Tibial artery (tissue), 4 donors: ENCODE measurements at regions of chr7 and their contacts with region 1.

Region 1: DNA sequence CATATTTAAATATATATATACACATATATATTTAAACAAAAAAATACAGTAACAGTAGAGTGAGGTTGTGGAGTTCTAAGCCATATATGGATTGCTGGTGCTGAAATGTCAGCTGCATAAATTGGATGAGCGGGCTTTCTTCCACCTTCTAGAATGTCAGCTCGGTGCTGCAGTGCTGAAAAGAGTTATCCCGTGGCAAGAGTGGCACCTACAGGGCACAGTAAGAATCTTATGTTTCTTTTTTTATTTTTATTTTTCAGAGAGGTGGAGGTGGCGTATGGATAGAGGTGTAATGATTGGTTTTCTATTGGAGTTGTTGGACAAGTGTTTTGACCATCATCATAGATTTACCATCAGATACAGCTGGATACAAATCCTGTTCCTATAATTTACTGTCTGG is 86.2 kb upstream of the DYNC1I1 start:
- DNase-seq: peak; percentile 40 to 68
- H3K4me3 ChIP-seq: no peak overlapping the region
- H3K27ac ChIP-seq: no peak overlapping the region
- H3K4me1 ChIP-seq: no peaks in the 10 kb centered on the region
- H3K27me3 ChIP-seq: no peaks in the 10 kb centered on the region
- CTCF ChIP-seq: peak; percentile 53 to 76

Region 2: DNA sequence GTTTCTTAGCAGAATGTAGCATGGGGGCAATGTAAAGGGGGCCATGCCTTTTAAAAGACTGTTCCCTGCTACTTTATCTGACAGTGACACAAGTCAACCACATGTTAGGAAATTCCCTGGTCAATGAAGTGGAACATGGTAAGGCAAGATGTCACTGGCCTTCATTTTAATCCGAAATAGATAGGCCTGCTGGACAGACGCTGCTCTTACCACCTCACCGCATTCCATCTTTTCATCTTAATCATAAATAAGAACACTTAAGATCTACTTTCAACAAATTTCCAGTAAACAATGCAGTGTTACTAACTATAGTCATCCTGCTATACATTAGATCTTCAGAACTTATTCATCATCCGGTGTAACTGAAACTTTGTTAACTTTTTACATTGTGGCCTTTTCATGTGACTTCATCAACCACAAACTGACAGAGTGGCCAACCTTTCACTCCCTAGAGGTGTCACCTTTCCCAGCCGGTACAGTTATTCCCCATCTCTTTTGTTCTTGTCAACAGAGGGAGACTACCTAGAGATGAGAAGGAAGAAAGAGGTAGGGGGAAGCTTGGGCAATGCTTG is 184.8 kb before region 1 on chr7:
- intact Hi-C with region 1: no loop called
- DNase-seq: no peak
- H3K4me3 ChIP-seq: no peak overlapping the region
- H3K27ac ChIP-seq: no peak overlapping the region
- H3K4me1 ChIP-seq: no peaks in the 10 kb centered on the region
- H3K27me3 ChIP-seq: no peaks in the 10 kb centered on the region
- CTCF ChIP-seq: no peak

Region 3: DNA sequence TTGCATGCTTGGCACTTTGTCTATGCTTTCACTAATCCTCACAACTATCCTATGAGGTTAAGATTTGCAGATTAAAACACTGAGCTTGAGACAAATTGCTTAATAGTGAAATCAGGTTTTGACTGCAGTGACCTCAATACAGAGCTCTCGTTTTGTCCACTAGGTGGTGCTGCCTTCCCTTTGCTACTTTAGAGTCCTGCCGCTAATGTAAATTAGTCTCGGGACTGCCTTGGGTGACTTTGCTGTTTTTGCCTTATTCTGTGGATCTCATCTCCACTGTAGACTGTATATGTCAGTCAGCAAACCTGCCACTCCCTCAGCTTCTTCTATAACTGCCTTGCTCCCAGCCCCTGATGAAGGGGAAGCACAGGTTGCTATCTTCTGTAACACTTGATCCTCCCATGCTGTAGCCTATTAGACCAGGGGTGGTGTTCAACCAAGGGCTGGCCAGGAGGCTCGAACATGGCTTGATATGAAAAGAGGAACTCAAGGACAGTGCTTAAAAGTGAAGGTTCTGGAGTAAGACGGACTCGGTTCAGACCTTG is 174.3 kb before region 1 on chr7:
- intact Hi-C with region 1: loop called (anchors 5 kb)
- DNase-seq: peak; percentile 73 to 80
- H3K4me3 ChIP-seq: no peak overlapping the region
- H3K27ac ChIP-seq: no peak overlapping the region
- H3K4me1 ChIP-seq: no peaks in the 10 kb centered on the region
- H3K27me3 ChIP-seq: no peaks in the 10 kb centered on the region
- CTCF ChIP-seq: peak; percentile 80 to 93

Region 4: GRCh38 chr7:95527033-95527775 is 158.9 kb before region 1 on chr7:
- intact Hi-C with region 1: loop called (anchors 2 kb)
- DNase-seq: peak in 1 of 2 donors; percentile 32
- H3K4me3 ChIP-seq: no peak overlapping the region
- H3K27ac ChIP-seq: no peak overlapping the region
- H3K4me1 ChIP-seq: no peaks in the 10 kb centered on the region
- H3K27me3 ChIP-seq: peaks cover 0 to 8% of the 10 kb centered on the region in 2 donors
- CTCF ChIP-seq: peak; percentile 89 to 91

Region 5: DNA sequence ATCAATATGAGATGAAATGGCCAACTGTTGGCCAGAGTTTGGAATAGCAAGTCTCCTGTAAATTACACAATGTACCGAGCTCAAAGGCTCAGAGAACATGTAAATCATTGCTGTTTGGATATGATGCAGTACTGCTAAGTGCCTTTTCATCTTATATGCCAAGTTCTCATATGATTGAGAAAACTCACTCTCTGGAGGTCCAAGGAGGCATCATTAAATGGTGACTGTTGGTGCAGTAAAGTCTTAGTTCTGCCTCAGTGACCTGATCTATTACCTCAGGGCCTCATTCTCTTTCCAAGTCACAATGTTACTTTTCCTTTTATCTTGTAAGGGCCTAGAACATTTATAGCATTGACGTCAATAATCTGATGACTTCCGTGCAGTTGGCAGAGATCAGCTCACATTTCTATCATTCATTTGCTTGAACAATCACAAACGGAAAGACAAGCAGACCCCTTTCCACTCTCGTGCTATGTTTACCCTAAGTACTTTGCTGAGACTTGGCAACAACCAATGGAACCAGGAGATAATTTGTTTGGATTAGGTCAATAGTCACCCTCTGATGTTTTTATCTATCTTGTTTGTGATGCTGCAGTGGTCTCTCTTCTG is 57.2 kb before region 1 on chr7:
- intact Hi-C with region 1: loop called (anchors 10 kb)
- DNase-seq: no peak
- H3K4me3 ChIP-seq: no peak overlapping the region
- H3K27ac ChIP-seq: peak overlapping the region; percentile 66 to 70
- H3K4me1 ChIP-seq: peaks cover 0 to 26% (median 11%) of the 10 kb centered on the region in 4 donors
- H3K27me3 ChIP-seq: no peaks in the 10 kb centered on the region
- CTCF ChIP-seq: peak; percentile 27 to 46